ENCODE measurements at regions of chr10 and their contacts with region 1.

Region 1: GRCh38 chr10:87887548-87888289 is 24.3 kb downstream of the PTEN start:
- DNase-seq: no peak
- ATAC-seq: peak; percentile 23
- H3K4me3 ChIP-seq: no peak overlapping the region
- H3K27ac ChIP-seq: no peak overlapping the region
- H3K4me1 ChIP-seq: peaks cover under 1% of the 10 kb centered on the region
- H3K27me3 ChIP-seq: no peaks in the 10 kb centered on the region
- CTCF ChIP-seq: no peak
- EP300 ChIP-seq: no peak
- POLR2A ChIP-seq: no peak; the same call in 1 of the 2 replicates
- RAD21 ChIP-seq: no peak

Region 2: GRCh38 chr10:87872828-87873227 is 14.9 kb before region 1 on chr10:
- CTCF ChIA-PET with region 1: interaction called, 5 read pairs
- POLR2A ChIA-PET with region 1: no interaction called
- RAD21 ChIA-PET with region 1: interaction called, 8 read pairs
- SMC1A ChIA-PET with region 1: interaction called, 12 read pairs
- in situ Hi-C with region 1: no loop called
- intact Hi-C with region 1: no loop called
- DNase-seq: no peak
- ATAC-seq: peak; percentile 8
- H3K4me3 ChIP-seq: peak overlapping the region; percentile 61
- H3K27ac ChIP-seq: no peak overlapping the region
- H3K4me1 ChIP-seq: no peaks in the 10 kb centered on the region
- H3K27me3 ChIP-seq: no peaks in the 10 kb centered on the region
- CTCF ChIP-seq: no peak
- EP300 ChIP-seq: no peak
- POLR2A ChIP-seq: no peak
- RAD21 ChIP-seq: no peak

Region 3: GRCh38 chr10:87925570-87925969 is 37.9 kb after region 1 on chr10:
- CTCF ChIA-PET with region 1: no interaction called
- POLR2A ChIA-PET with region 1: no interaction called
- RAD21 ChIA-PET with region 1: interaction called, 4 read pairs
- SMC1A ChIA-PET with region 1: interaction called, 7 read pairs
- in situ Hi-C with region 1: no loop called
- intact Hi-C with region 1: loop called (anchors 5 kb)
- DNase-seq: no peak
- ATAC-seq: no peak
- H3K4me3 ChIP-seq: no peak overlapping the region
- H3K27ac ChIP-seq: no peak overlapping the region
- H3K4me1 ChIP-seq: peaks cover 26% of the 10 kb centered on the region
- H3K27me3 ChIP-seq: no peaks in the 10 kb centered on the region
- CTCF ChIP-seq: no peak
- EP300 ChIP-seq: no peak
- POLR2A ChIP-seq: no peak
- RAD21 ChIP-seq: no peak

Region 4: GRCh38 chr10:89122433-89123051 is 1234.8 kb after region 1 on chr10:
- CTCF ChIA-PET with region 1: no interaction called
- POLR2A ChIA-PET with region 1: interaction called, 10 read pairs
- RAD21 ChIA-PET with region 1: no interaction called
- SMC1A ChIA-PET with region 1: no interaction called
- in situ Hi-C with region 1: no loop called
- intact Hi-C with region 1: no loop called
- DNase-seq: no peak
- ATAC-seq: peak; percentile 28; the same call in 1 of the 3 replicates
- H3K4me3 ChIP-seq: no peak overlapping the region
- H3K27ac ChIP-seq: no peak overlapping the region
- H3K4me1 ChIP-seq: no peaks in the 10 kb centered on the region
- H3K27me3 ChIP-seq: no peaks in the 10 kb centered on the region
- CTCF ChIP-seq: no peak
- EP300 ChIP-seq: no peak
- POLR2A ChIP-seq: no peak
- RAD21 ChIP-seq: no peak

Measured in GM12878 (cell line).